Activated naive CD4-positive, alpha-beta T cell treated with anti-CD3 and anti-CD28 coated beads for 36 hours (primary cell): ENCODE measurements at regions of chr1 and their contacts with region 1.

Region 1: DNA sequence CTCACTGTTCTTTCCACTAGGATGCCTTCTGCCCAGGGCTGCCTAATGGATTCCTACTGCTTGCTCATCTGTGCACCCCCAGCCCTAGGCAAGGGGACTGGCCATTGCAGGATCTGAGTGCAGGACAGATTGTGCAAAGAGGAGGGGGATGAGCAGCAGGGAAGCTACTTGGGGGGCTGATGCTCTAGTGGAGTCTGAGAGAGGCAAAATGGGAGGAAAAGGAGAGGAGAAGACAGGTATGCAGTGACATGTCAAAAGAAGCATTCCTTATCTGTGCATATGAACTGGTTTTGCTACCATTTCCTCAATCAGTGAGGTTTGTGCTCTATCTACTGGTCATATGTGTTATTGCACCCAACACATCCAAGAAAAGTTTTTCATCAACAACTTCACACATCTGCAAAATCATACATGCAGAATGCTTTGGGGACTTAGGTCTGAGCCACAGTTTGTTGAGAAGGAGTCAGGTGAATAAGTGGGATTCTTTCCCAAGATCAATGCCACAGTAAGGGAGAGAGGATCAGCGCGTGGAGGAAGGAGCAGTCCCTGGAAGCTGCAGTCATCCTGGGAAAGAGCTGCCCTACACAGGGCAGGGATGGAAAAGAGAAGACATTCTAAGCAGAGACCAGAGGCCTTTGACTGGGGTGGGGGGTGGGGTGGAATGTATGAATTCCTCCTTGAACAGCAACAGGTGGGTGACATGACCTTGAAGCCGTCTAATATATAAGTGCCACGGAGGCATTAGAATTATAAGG is 14.4 kb downstream of the SLC5A9 start:
- DNase-seq: no peak
- H3K4me3 Mint-ChIP-seq: no peak overlapping the region
- H3K27ac Mint-ChIP-seq: no peak overlapping the region
- H3K4me1 Mint-ChIP-seq: no peaks in the 10 kb centered on the region
- H3K27me3 Mint-ChIP-seq: no peaks in the 10 kb centered on the region

Region 2: DNA sequence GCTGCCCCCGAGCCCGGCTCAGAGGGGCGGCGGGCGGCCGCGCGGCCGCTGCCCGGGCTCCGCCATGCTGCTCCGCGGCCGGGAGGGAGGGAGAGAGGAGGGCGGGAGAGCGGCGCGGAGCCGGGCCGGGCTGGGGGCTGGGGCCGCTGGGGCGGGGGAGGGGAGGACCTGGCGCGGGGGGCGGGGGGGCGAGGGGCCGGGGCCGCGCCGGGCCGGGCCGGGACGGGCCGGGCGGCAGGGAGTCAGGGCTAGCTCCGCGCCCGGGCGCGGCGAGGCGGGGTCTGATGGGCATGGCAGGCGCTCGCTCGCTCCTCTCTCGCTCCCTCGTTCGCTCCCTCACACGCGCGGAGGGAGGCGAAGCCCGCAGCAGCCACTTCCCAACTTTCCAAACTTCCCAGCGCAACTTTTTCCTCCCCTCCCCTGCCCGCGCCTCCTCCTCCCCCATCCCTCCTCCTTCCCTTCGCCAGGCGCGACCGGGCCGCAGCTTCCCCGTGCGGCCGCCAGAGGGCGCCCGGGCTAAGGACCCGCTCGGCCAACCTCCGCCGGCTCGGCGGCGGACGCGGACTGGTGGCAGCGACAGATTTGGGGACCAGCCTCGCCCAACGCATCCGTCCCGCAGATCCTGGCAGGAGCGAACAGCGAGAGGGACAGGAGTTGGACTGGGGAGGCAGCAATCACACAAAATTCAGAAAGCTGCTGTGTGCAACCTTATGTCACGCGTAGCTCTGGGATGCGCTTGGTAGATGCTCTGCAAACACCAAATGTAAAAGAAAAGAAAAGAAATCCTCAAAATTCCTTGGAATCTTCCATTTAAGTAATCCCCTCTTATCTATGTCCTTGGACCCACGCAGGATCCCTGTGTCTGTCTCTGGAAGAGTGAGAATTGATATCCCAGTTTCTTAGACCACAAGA is 239.3 kb before region 1 on chr1 and contains the start of gene TRABD2B:
- CTCF ChIA-PET with region 1: interaction called, 3 read pairs
- intact Hi-C with region 1: loop called (anchors 10 kb)
- DNase-seq: peak; percentile 65
- H3K4me3 Mint-ChIP-seq: peak within 1 kb of the TSS; percentile 68
- H3K27ac Mint-ChIP-seq: no peak within 1 kb of the TSS
- H3K4me1 Mint-ChIP-seq: peaks cover 4% of the 10 kb centered on the region
- H3K27me3 Mint-ChIP-seq: peaks cover 50% of the 10 kb centered on the region
- total RNA-seq, gene TRABD2B: not detected

Region 3: GRCh38 chr1:48093696-48094528 is 143.0 kb before region 1 on chr1:
- CTCF ChIA-PET with region 1: interaction called, 5 read pairs
- intact Hi-C with region 1: loop called (anchors 1 kb)
- DNase-seq: peak; percentile 88
- H3K4me3 Mint-ChIP-seq: peak overlapping the region; percentile 42
- H3K27ac Mint-ChIP-seq: no peak overlapping the region
- H3K4me1 Mint-ChIP-seq: peaks cover 5% of the 10 kb centered on the region
- H3K27me3 Mint-ChIP-seq: peaks cover 45% of the 10 kb centered on the region

Region 4: DNA sequence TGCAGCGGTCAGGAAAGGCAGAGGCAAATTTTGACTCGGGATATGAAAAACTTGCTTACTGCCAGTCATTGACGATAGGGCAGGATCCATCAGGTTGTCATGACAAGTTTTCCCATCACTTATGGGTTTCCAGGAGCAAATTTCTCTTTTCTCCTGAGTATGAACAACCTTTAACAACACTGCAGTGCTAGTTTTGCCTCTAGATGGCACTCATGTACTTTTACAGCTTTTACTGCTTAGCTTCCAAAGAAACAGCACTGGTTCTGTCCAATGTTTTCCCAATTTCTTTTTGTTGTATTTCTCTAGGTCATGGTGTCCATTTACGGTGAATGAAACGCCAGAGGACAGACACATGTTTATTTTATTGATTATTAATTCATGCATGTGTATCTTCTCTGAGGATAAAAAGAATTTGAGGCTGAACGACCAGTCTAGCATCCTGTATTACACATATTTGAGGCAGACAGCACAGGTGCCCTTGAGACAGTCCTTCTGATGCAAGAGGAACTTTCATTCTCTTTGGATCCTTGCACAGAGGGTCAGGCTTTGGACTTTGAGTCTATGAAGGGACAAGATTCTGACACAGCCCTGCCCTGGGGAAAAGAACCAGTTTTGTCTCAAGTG is 127.4 kb before region 1 on chr1:
- CTCF ChIA-PET with region 1: interaction called, 14 read pairs
- intact Hi-C with region 1: loop called (anchors 1 kb)
- DNase-seq: peak; percentile 17
- H3K4me3 Mint-ChIP-seq: no peak overlapping the region
- H3K27ac Mint-ChIP-seq: no peak overlapping the region
- H3K4me1 Mint-ChIP-seq: peaks cover 4% of the 10 kb centered on the region
- H3K27me3 Mint-ChIP-seq: peaks cover 20% of the 10 kb centered on the region

Region 5: GRCh38 chr1:48190881-48191280 is 46.0 kb before region 1 on chr1:
- CTCF ChIA-PET with region 1: no interaction called
- intact Hi-C with region 1: no loop called
- DNase-seq: no peak
- H3K4me3 Mint-ChIP-seq: no peak overlapping the region
- H3K27ac Mint-ChIP-seq: no peak overlapping the region
- H3K4me1 Mint-ChIP-seq: no peaks in the 10 kb centered on the region
- H3K27me3 Mint-ChIP-seq: peaks cover 23% of the 10 kb centered on the region

Region 6: DNA sequence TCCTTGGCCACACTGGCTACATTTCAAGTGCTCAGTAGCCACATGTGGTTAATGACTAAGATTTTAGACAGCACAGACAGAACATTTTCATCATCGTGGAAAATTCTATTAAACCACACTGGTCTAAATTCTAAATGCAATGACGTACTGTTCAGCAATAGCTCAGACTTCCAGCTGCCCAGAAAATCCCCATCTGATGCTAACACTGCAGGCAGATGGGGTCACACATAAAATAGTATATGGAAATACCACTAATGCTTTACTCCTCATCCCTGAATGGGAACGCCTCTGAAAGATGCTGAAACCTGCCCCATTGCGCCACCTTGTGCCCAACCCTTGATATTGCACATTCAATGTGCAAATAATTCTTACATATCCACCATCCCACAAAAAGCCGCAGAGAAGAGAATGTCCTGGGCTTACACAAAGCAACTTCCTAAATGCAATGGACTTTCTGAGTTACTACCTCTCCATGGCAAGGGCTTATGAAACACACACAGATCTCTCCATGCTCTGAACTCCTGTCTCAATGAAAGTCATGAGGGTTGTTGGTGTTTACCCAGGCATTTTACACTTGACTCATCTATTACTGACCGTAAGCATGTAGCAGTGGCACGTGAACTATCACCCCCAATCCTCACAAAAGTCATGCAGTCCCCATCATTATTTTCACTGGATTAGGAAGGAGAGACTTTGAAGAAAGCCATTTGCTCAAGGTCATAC is 34.7 kb before region 1 on chr1:
- CTCF ChIA-PET with region 1: no interaction called
- intact Hi-C with region 1: loop called (anchors 1 kb)
- DNase-seq: peak; percentile 80
- H3K4me3 Mint-ChIP-seq: no peak overlapping the region
- H3K27ac Mint-ChIP-seq: no peak overlapping the region
- H3K4me1 Mint-ChIP-seq: peaks cover 4% of the 10 kb centered on the region
- H3K27me3 Mint-ChIP-seq: peaks cover 2% of the 10 kb centered on the region